ENCODE measurements at regions of chr12 and their contacts with region 1.

Region 1: GRCh38 chr12:54368709-54369583 is 4.7 kb upstream of the GPR84 start:
- DNase-seq: peak; percentile 46
- H3K4me3 ChIP-seq: peak overlapping the region; percentile 15 to 54 (median 32)
- H3K27ac ChIP-seq: peak overlapping the region; percentile 44 to 84 (median 76)
- H3K4me1 ChIP-seq: peaks cover 28 to 59% (median 32%) of the 10 kb centered on the region in 3 donors
- H3K27me3 ChIP-seq: no peaks in the 10 kb centered on the region
- CTCF ChIP-seq: peak; percentile 66 to 90 (median 84)
- POLR2A ChIP-seq: no peak

Region 2: GRCh38 chr12:54294152-54294952 is 74.6 kb before region 1 on chr12:
- intact Hi-C with region 1: loop called (anchors 10 kb)
- DNase-seq: no peak
- H3K4me3 ChIP-seq: no peak overlapping the region
- H3K27ac ChIP-seq: no peak overlapping the region
- H3K4me1 ChIP-seq: peaks cover 0 to 5% (median 0%) of the 10 kb centered on the region in 3 donors
- H3K27me3 ChIP-seq: peaks cover 0 to 11% (median 0%) of the 10 kb centered on the region in 4 donors
- CTCF ChIP-seq: peak; percentile 58 to 83 (median 70)
- POLR2A ChIP-seq: no peak

Measured in esophagus squamous epithelium (tissue), 5 donors.